Spleen (tissue), 13 donors: ENCODE measurements at regions of chr20 and their contacts with region 1.

Region 1: GRCh38 chr20:5788385-5788895 is 38.2 kb downstream of the SHLD1 start:
- DNase-seq: peak; percentile 88
- H3K4me3 ChIP-seq: no peak overlapping the region
- H3K27ac ChIP-seq: no peak overlapping the region
- H3K4me1 ChIP-seq: peaks cover 0 to 38% (median 15%) of the 10 kb centered on the region in 6 donors
- H3K27me3 ChIP-seq: no peaks in the 10 kb centered on the region
- CTCF ChIP-seq: peak; percentile 69 to 93 (median 87)
- POLR2A ChIP-seq: no peak

Region 2: GRCh38 chr20:5569021-5569420 is 219.4 kb before region 1 on chr20:
- intact Hi-C with region 1: loop called (anchors 5 kb)
- DNase-seq: no peak
- H3K4me3 ChIP-seq: no peak overlapping the region
- H3K27ac ChIP-seq: peak overlapping the region in 7 of 8 donors; percentile 60 to 87 (median 77)
- H3K4me1 ChIP-seq: peaks cover 5 to 51% (median 23%) of the 10 kb centered on the region in 6 donors
- H3K27me3 ChIP-seq: no peaks in the 10 kb centered on the region
- CTCF ChIP-seq: peak; percentile 11 to 79 (median 52)
- POLR2A ChIP-seq: no peak

Region 3: DNA sequence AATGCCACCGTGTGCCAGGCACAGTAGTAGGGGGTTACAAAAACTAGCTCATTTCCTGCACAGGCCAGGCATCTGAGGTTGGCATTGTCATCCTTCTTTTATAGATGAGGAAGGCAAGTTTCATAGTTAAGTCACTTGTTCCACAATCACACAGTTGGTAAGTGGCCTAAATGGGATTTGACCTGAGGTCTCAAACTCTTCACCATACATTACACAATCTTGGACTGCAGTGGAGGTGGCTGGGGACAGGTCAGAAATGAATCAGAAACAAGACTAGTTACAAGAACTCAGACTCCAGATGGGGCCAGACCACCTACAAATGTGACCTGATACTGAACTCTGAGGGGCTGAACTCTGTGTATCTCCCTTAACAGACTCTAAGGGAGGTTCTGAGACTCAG is 112.5 kb after region 1 on chr20:
- intact Hi-C with region 1: no loop called
- DNase-seq: no peak
- H3K4me3 ChIP-seq: no peak overlapping the region
- H3K27ac ChIP-seq: no peak overlapping the region
- H3K4me1 ChIP-seq: no peaks in the 10 kb centered on the region
- H3K27me3 ChIP-seq: peaks cover 0 to 24% (median 0%) of the 10 kb centered on the region in 7 donors
- CTCF ChIP-seq: no peak
- POLR2A ChIP-seq: no peak